ENCODE measurements at regions of chr1 and their contacts with region 1.

Region 1: GRCh38 chr1:184905474-184905894 is 68.8 kb downstream of the NIBAN1 start:
- DNase-seq: no peak
- H3K4me3 Mint-ChIP-seq: no peak overlapping the region
- H3K27ac Mint-ChIP-seq: no peak overlapping the region
- H3K4me1 Mint-ChIP-seq: peaks cover 8% of the 10 kb centered on the region
- H3K27me3 Mint-ChIP-seq: peaks cover 95% of the 10 kb centered on the region
- CTCF ChIP-seq: no peak

Region 2: DNA sequence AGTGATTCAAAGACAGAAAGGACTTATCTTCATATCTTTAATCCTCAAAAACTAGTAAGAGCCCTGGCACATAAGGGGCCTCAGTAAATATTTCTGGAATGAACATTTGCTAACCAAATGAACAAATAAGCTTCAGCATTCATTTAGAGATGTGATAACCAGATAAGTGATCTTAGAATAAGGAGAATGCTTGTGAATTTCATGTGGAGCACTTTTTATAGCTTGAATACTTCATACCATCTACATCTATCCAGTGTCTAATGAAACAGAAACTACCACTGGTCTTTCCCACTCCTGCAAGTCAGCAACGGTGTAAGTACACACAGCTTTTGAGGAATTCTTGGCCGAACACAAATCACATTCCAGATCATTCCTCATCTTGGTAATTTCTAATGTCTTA is 189.3 kb before region 1 on chr1:
- CTCF ChIA-PET with region 1: no interaction called
- POLR2A ChIA-PET with region 1: no interaction called
- intact Hi-C with region 1: no loop called
- DNase-seq: no peak
- H3K4me3 Mint-ChIP-seq: no peak overlapping the region
- H3K27ac Mint-ChIP-seq: no peak overlapping the region
- H3K4me1 Mint-ChIP-seq: no peaks in the 10 kb centered on the region
- H3K27me3 Mint-ChIP-seq: no peaks in the 10 kb centered on the region
- CTCF ChIP-seq: no peak

Region 3: GRCh38 chr1:184892116-184892515 is 13.4 kb before region 1 on chr1:
- CTCF ChIA-PET with region 1: interaction called, 6 read pairs
- POLR2A ChIA-PET with region 1: interaction called, 18 read pairs
- intact Hi-C with region 1: no loop called
- DNase-seq: no peak
- H3K4me3 Mint-ChIP-seq: no peak overlapping the region
- H3K27ac Mint-ChIP-seq: no peak overlapping the region
- H3K4me1 Mint-ChIP-seq: no peaks in the 10 kb centered on the region
- H3K27me3 Mint-ChIP-seq: peaks cover 96% of the 10 kb centered on the region
- CTCF ChIP-seq: no peak

Region 4: GRCh38 chr1:184941735-184942134 is 36.3 kb after region 1 on chr1:
- CTCF ChIA-PET with region 1: interaction called, 3 read pairs
- POLR2A ChIA-PET with region 1: interaction called, 4 read pairs
- intact Hi-C with region 1: loop called (anchors 5 kb)
- DNase-seq: no peak
- H3K4me3 Mint-ChIP-seq: no peak overlapping the region
- H3K27ac Mint-ChIP-seq: no peak overlapping the region
- H3K4me1 Mint-ChIP-seq: no peaks in the 10 kb centered on the region
- H3K27me3 Mint-ChIP-seq: peaks cover 82% of the 10 kb centered on the region
- CTCF ChIP-seq: no peak